Body of pancreas (tissue), 4 donors: ENCODE measurements at regions of chr1 and their contacts with region 1.

Region 1: GRCh38 chr1:157069601-157070000 is 24.1 kb upstream of the ARHGEF11 start:
- DNase-seq: no peak
- ATAC-seq: no peak
- H3K4me3 ChIP-seq: no peak overlapping the region
- H3K27ac ChIP-seq: no peak overlapping the region
- H3K4me1 ChIP-seq: peaks cover 7% of the 10 kb centered on the region
- H3K27me3 ChIP-seq: no peaks in the 10 kb centered on the region
- CTCF ChIP-seq: no peak
- POLR2A ChIP-seq: no peak

Region 2: GRCh38 chr1:157000686-157001085 is 68.9 kb before region 1 on chr1:
- intact Hi-C with region 1: loop called (anchors 10 kb)
- DNase-seq: no peak
- ATAC-seq: no peak
- H3K4me3 ChIP-seq: no peak overlapping the region
- H3K27ac ChIP-seq: no peak overlapping the region
- H3K4me1 ChIP-seq: no peaks in the 10 kb centered on the region
- H3K27me3 ChIP-seq: no peaks in the 10 kb centered on the region
- CTCF ChIP-seq: no peak
- POLR2A ChIP-seq: no peak